Panc1 (cell line): ENCODE measurements at regions of chr5 and their contacts with region 1.

Region 1: GRCh38 chr5:10489810-10490426 is 48.2 kb downstream of the ROPN1L start:
- DNase-seq: no peak
- ATAC-seq: 0 out of 2 replicates have a peak, but pooled peaks have one; percentile 22
- H3K4me3 ChIP-seq: no peak overlapping the region
- H3K27ac ChIP-seq: no peak overlapping the region
- H3K4me1 ChIP-seq: no peaks in the 10 kb centered on the region
- H3K27me3 ChIP-seq: peaks cover 3% of the 10 kb centered on the region; the same call in 1 of the 2 replicates
- CTCF ChIP-seq: no peak

Region 2: DNA sequence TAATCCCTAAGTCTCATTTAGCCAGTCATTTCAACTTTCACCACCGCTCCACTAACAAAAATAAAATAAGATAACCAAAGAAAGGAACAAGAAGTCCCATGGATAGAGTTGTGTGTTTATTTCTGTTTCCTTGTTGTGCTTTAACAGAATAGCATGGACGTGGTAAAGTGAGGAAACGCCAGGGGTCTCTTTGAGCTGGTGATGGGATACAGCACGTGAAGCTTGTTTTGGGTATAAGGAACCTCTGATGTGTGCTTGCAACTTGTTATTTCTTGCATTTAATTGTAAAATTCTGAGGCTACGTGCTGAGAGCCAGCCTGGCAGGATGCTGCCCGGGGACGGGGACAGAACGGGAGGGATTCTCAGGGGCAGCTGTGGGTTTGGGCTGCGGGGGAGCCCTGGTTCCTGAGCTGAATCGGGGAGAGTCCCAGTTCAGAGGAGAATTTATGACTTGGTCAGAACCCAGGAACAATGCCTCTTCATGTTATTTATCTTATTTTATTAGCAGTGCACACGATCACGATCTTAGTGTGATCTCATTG is 137.3 kb after region 1 on chr5:
- CTCF ChIA-PET with region 1: interaction called, 16 read pairs
- POLR2A ChIA-PET with region 1: no interaction called
- in situ Hi-C with region 1: no loop called
- intact Hi-C with region 1: no loop called
- DNase-seq: no peak
- ATAC-seq: peak; percentile 54
- H3K4me3 ChIP-seq: peak overlapping the region; percentile 29 to 64
- H3K27ac ChIP-seq: peak overlapping the region; percentile 65
- H3K4me1 ChIP-seq: peaks cover 16% of the 10 kb centered on the region
- H3K27me3 ChIP-seq: no peaks in the 10 kb centered on the region
- CTCF ChIP-seq: no peak

Region 3: GRCh38 chr5:10645146-10645545 is 155.2 kb after region 1 on chr5:
- CTCF ChIA-PET with region 1: no interaction called
- POLR2A ChIA-PET with region 1: interaction called, 14 read pairs
- in situ Hi-C with region 1: no loop called
- intact Hi-C with region 1: no loop called
- DNase-seq: no peak
- ATAC-seq: no peak
- H3K4me3 ChIP-seq: no peak overlapping the region
- H3K27ac ChIP-seq: no peak overlapping the region
- H3K4me1 ChIP-seq: no peaks in the 10 kb centered on the region; the same call in 1 of the 2 replicates
- H3K27me3 ChIP-seq: no peaks in the 10 kb centered on the region
- CTCF ChIP-seq: no peak

Region 4: GRCh38 chr5:10704949-10705621 is 215.2 kb after region 1 on chr5:
- CTCF ChIA-PET with region 1: no interaction called
- POLR2A ChIA-PET with region 1: interaction called, 20 read pairs
- in situ Hi-C with region 1: no loop called
- intact Hi-C with region 1: no loop called
- DNase-seq: no peak
- ATAC-seq: no peak
- H3K4me3 ChIP-seq: no peak overlapping the region
- H3K27ac ChIP-seq: no peak overlapping the region
- H3K4me1 ChIP-seq: peaks cover 12% of the 10 kb centered on the region
- H3K27me3 ChIP-seq: no peaks in the 10 kb centered on the region
- CTCF ChIP-seq: no peak